HEK293T (cell line): ENCODE measurements at regions of chr17 and their contacts with region 1.

Region 1: DNA sequence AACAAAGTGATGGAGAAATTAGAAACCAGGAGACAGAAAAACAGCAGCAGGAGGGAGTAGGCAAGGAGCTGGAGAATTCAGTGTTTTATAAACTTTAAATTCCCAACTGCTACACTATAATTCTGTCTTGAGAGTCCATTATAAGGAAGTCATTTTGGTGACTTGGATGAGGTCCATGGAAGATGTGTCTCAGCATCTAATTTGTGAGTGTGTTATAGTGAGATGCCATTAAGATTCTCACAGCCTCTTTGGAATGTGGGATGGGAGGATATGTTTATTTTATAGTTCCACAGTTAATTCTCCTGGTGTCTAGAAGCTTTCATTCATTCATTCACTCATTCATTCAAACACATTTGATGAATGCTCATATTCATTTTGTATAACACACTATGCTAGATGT is 206.0 kb upstream of the MYOCD start:
- DNase-seq: no peak

Region 2: GRCh38 chr17:12421646-12422306 is 38.0 kb before region 1 on chr17:
- CTCF ChIA-PET with region 1: no interaction called
- POLR2A ChIA-PET with region 1: no interaction called
- DNase-seq: no peak

Region 3: GRCh38 chr17:12510535-12510934 is 50.8 kb after region 1 on chr17:
- CTCF ChIA-PET with region 1: interaction called, 10 read pairs
- POLR2A ChIA-PET with region 1: no interaction called
- DNase-seq: no peak